ENCODE measurements at regions of chr1 and their contacts with region 1.

Region 1: DNA sequence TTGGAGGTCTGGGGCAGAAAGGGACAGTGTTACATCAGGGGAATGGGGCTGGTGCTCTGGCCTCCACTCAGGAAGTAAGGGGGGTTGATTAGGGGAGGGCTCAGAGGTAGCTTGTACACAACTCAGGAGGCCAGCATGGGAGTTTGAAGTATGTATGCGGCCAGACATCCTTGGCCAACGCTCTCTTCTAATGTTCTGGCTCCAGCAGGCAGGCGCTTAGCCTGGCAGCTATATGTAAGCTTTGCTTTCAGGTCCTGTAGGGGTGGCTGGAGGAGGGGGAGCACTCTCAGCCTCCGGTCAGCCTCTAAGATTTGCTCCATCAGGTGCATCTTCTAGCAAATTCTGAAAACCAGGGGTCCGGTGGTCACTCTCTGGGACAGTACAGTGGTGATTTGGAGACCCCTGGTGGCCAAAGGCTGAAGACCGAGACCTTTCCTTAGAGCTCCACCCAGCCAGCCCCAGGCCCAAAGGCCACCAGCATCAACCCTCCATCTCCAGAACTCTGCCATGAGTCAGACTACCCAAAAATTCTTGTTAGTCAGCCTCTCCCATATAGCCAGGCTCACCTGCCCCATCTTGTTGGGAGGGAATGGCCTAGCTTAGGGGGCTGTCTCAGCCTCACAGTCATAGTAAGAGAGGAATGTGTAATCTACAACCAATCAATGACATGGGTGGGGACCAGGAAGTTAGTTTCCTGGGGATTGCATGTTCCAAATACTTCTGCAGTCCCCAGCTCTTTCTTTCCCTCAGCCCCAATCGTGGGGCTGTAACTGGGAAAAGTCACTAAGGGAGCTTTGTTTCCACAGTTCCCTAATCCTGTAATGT is 9.7 kb upstream of the COL8A2 start:
- DNase-seq: peak; percentile 79
- CTCF ChIP-seq: peak; percentile 54

Region 2: GRCh38 chr1:35870651-35871309 is 263.9 kb before region 1 on chr1:
- CTCF ChIA-PET with region 1: no interaction called
- POLR2A ChIA-PET with region 1: no interaction called
- DNase-seq: no peak
- CTCF ChIP-seq: no peak

Region 3: DNA sequence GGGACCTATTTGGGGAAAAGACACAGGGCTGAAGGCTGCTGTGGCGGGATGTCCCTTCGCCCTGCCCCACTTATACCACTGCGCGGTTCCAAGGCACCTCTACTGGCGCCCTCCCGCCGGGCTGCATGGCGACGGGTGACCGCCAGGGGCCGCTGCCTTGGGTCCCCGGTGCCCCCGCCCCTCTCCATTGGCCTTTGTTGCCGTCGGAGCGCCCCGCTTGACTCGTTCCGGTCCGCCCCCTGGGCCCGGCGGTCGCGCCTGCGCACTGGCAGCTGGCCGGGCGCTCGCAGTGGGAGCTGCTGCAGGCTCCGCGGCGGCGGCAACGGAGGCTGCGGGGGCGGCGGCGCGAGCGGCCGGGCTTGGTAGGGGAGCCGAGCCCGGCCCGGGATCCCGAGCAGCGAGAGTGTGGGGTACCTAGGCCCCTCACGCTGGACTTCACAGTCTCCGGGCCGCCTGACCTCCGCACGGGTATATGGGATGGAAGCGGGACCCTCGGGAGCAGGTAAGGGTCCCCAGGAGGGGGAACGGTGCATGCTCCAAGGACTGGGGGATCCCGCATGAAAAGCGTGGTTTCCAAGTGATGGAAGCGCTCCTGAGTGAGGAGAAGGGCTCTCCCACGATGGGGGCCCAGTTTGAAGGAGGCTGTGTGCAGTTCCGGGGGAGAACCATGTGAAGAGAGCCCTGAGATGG is 251.6 kb before region 1 on chr1 and contains the start of gene AGO1:
- CTCF ChIA-PET with region 1: interaction called, 11 read pairs
- POLR2A ChIA-PET with region 1: no interaction called
- DNase-seq: peak; percentile 100
- CTCF ChIP-seq: peak; percentile 99

Region 4: DNA sequence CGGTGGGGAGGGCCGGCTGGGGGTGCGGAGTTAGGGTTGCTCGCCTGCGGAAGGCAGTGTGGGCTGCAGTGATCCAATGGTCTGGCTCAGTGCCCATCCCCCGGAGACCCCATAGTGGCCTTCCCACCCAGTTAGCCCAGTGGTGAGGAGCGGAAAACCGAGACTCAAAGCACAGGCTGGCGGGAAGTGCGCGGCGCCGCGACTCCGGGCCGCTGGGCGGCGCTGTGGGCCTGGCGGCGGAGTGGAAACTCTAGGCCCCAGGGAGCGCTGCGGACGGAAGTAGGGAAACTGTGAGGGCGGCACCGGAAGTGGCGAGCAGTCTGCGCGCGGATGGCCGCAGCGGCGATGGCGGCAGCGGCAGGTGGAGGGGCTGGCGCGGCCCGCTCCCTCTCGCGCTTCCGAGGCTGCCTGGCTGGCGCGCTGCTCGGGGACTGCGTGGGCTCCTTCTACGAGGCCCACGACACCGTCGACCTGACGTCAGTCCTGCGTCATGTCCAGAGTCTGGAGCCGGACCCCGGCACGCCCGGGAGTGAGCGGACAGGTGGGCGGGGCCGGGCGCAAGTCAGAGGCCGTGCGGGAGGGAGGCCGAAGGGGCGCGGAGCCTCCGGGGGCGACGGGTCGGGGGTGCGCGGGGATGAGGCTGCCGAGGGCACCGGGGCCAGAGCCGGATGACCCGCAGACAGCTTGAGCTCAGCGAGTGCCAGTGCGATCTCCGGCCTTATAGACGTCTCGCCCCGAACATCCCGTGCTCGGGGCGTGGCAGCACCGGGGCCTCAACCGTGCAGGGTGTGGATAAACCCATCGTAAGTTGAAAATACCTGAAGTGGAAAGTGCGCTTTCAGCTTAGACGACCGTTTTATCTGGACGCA is 45.9 kb before region 1 on chr1 and contains the start of gene ADPRS:
- CTCF ChIA-PET with region 1: interaction called, 226 read pairs
- POLR2A ChIA-PET with region 1: no interaction called
- DNase-seq: peak; percentile 94
- CTCF ChIP-seq: peak; percentile 98

Region 5: GRCh38 chr1:36115931-36116330 is 18.8 kb before region 1 on chr1:
- CTCF ChIA-PET with region 1: interaction called, 35 read pairs
- POLR2A ChIA-PET with region 1: no interaction called
- DNase-seq: no peak
- CTCF ChIP-seq: no peak

Region 6: DNA sequence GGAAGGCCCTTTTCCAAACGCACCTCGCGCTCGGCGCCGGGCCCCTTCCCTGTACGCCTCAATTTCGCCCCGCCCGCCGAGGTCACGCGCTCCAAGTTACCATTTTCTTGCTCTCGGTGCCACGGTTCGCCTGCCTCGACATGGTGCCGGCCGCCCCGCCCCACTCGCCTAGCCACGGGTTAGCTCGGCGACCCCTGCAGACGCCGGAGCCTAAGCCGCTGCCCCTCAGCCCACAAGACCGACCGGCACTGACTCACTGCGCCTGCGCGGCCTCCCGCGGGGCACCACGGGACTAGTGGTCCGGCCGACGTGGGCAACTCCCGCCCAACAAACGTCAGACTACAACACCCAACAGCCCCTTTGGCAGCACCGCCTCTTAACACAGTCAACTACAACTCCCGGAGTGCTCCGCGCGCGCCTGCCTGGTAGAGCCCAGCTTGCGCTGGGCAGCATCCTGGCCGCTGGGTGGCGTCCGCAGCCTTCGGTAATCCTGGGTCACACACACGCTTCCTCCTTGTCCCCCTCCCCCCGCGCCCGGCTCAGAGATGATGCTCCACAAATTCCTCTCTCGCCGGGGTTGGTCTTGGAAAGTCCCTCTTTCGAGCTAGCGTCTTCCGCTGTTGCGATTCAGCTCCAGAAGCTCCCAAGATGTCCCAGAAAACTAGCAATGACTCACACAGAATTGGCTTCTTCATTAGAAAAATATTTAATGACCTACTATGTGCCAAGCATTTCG is 14.7 kb after region 1 on chr1 and contains the start of gene TRAPPC3:
- CTCF ChIA-PET with region 1: interaction called, 29 read pairs
- POLR2A ChIA-PET with region 1: no interaction called
- DNase-seq: peak; percentile 98
- CTCF ChIP-seq: peak; percentile 99